ENCODE measurements at regions of chr20 and their contacts with region 1.

Region 1: DNA sequence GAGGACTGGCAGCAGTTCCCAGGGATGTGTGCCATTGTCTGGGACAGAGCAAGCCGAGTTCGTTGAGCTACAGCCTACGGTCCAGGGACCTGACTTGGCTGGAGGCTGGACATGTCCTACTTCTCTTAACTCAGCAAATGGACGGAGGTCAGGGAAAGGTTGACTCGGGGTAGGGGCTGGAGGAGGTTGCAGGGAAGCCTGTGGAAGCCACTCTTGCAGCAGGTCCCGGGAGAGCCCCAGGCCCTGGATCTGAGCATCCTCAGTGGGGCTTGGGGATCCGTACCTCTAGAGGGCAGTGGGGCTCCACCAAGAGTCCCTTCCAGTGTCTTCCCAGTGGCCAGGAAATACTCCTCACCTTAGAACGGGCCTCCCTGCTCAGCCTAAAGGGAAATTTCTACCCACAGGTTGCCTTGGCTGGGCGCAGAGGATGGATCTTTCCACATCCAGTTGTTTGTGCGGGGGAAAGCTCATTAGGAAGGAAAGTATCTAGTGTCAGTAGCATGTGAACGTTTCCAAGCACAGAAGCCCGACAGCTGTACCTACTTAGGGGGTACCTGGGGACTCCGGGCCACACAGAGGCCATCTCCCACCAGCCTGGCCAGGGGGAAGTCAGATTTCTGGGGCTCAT is 170.2 kb downstream of the NFATC2 start:
- DNase-seq: peak; percentile 75
- ATAC-seq: peak; percentile 87
- H3K4me3 Mint-ChIP-seq: no peak overlapping the region
- H3K27ac Mint-ChIP-seq: no peak overlapping the region
- H3K4me1 Mint-ChIP-seq: peaks cover 4% of the 10 kb centered on the region
- H3K27me3 Mint-ChIP-seq: no peaks in the 10 kb centered on the region
- CTCF ChIP-seq: peak; percentile 77

Region 2: DNA sequence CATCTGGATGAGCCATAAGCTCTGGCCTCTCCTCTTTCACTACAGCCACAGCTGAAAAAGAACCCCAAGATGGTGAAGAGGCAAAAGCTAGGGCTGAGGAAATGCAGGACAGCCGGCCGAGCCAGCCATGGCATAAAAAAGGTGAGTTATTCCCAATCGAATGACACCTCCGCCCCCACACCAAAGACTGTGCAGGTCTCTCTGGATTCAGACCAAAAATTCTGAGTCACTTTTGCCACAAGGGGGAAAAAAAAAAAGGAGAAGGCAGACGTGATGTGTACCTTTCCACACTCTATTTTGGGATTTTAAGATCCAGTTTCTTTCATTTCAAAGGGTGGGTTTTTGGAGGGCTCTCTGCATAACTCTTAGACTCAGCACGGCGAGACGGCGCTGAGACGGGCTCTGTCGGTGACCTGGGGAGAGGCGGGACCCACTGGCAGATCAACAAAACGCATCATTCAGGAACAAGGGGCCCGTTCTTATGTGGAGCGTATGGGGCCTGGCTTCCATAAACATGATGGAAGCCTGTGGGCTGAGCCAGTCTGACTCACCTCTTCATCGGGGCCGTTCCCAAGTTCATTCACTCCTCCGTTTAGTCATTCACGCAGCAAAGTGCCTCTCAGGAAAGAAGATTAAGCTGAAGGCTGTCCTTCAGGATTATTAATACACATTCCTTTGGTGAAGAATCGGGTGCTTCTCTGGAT is 115.4 kb after region 1 on chr20:
- CTCF ChIA-PET with region 1: no interaction called
- POLR2A ChIA-PET with region 1: no interaction called
- intact Hi-C with region 1: no loop called
- DNase-seq: no peak
- ATAC-seq: no peak
- H3K4me3 Mint-ChIP-seq: no peak overlapping the region
- H3K27ac Mint-ChIP-seq: peak overlapping the region; percentile 32
- H3K4me1 Mint-ChIP-seq: peaks cover 87% of the 10 kb centered on the region
- H3K27me3 Mint-ChIP-seq: no peaks in the 10 kb centered on the region
- CTCF ChIP-seq: no peak

Region 3: DNA sequence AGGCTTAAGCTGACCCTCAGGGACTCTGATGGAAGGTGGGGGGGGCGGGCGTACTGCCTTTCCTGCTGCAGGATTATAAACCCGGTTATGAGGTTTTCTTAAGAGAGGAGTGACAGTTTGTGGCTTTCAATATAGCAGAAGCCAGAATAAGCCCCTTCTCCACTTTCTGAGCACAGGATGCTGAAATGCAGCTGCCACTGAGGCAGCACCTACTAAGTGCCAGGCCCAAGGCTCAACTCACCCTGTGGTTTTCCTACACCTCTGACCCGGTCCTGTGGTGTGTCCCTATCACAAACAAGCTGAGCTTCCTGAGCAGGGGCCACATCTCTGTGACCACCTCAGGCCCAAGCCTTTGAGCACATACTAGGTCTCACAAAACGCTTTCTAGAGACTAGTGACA is 229.8 kb after region 1 on chr20:
- CTCF ChIA-PET with region 1: interaction called, 47 read pairs
- POLR2A ChIA-PET with region 1: no interaction called
- intact Hi-C with region 1: no loop called
- DNase-seq: no peak
- ATAC-seq: no peak
- H3K4me3 Mint-ChIP-seq: no peak overlapping the region
- H3K27ac Mint-ChIP-seq: no peak overlapping the region
- H3K4me1 Mint-ChIP-seq: peaks cover 29% of the 10 kb centered on the region
- H3K27me3 Mint-ChIP-seq: peaks cover 7% of the 10 kb centered on the region
- CTCF ChIP-seq: no peak

Region 4: GRCh38 chr20:51624157-51624731 is 252.0 kb after region 1 on chr20:
- CTCF ChIA-PET with region 1: interaction called, 19 read pairs
- POLR2A ChIA-PET with region 1: no interaction called
- intact Hi-C with region 1: loop called (anchors 5 kb)
- DNase-seq: peak; percentile 80
- ATAC-seq: peak; percentile 86
- H3K4me3 Mint-ChIP-seq: no peak overlapping the region
- H3K27ac Mint-ChIP-seq: peak overlapping the region; percentile 46
- H3K4me1 Mint-ChIP-seq: peaks cover 10% of the 10 kb centered on the region
- H3K27me3 Mint-ChIP-seq: no peaks in the 10 kb centered on the region
- CTCF ChIP-seq: peak; percentile 87

Measured in activated CD8-positive, alpha-beta T cell treated with anti-CD3 and anti-CD28 coated beads for 36 hours (primary cell).